ENCODE measurements at regions of chr1 and their contacts with region 1.

Region 1: DNA sequence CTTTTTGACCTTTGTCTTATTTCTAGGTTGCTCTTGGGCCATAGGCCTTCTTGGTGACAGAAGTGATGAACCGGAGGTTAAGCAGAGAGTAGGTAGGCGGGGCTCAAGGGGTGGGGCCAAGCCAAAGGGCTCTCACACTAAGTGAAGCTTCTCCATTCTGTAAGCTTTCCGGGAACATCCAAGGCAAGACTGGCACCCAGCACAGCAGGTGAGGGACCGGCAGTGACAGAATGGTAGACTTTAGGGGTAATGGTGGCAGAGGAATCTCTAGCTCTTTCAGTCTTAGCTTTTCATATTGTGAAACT is at the start of gene TNFAIP8L2:
- DNase-seq: no peak
- ATAC-seq: peak; percentile 54
- H3K4me3 ChIP-seq: no peak within 1 kb of the TSS
- H3K27ac ChIP-seq: no peak within 1 kb of the TSS
- H3K4me1 ChIP-seq: peaks cover 8% of the 10 kb centered on the region
- H3K27me3 ChIP-seq: no peaks in the 10 kb centered on the region
- CTCF ChIP-seq: no peak
- EP300 ChIP-seq: no peak
- POLR2A ChIP-seq: no peak
- RAD21 ChIP-seq: no peak
- total RNA-seq, gene TNFAIP8L2: not detected in 2 replicates

Region 2: DNA sequence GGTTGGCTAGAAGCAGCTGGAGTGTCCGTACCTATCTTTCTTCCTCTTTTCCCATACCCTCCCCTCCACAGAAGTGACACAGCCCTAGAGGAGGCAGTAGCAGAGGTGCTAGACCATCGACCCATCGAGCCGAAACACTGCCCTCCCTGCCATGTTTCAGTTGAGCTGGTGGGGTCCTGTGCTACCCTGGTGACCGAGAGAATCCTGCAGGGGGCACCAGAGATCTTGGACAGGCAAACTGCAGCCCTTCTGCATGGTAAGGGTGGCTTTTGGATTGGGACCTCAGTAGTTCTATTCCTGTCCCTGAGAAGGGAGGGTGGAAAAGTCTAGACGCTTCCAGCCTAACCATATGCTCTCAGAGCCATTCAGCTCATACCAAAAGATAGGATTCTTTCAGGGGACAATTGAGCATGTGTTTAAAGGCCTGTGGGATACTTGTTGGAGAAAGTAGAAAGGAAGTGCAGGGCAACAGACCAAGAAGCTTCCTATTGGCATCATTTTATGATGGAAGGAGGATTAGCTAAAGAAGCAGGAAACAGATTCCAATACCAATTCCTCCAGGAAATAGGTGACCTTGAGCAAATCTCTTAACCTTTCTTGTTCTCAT is 131.8 kb before region 1 on chr1:
- CTCF ChIA-PET with region 1: interaction called, 10 read pairs
- POLR2A ChIA-PET with region 1: no interaction called
- in situ Hi-C with region 1: no loop called
- intact Hi-C with region 1: loop called (anchors 2 kb)
- DNase-seq: peak; percentile 58
- ATAC-seq: peak; percentile 97
- H3K4me3 ChIP-seq: no peak overlapping the region
- H3K27ac ChIP-seq: no peak overlapping the region
- H3K4me1 ChIP-seq: no peaks in the 10 kb centered on the region
- H3K27me3 ChIP-seq: no peaks in the 10 kb centered on the region
- CTCF ChIP-seq: peak; percentile 91
- EP300 ChIP-seq: no peak
- POLR2A ChIP-seq: no peak
- RAD21 ChIP-seq: peak; percentile 78

Region 3: DNA sequence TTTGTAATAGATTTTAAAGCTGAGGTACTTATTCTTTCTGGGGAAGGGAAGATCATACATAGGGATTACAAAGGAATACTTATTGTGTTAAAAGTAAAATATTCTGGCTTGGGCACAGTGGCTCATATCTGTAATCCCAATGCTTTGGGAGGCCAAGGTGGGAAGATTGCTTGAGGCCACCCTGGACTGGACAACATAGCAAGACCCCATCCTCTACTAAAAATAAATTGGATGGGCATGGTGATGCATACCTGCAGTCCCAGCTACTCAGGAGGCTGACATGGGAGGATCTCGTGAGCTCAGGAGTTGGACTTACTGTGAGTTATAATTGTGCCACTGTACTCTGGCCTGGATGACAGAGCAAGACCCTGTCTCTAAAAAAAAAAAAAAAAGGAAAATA is 58.3 kb before region 1 on chr1:
- CTCF ChIA-PET with region 1: interaction called, 45 read pairs
- POLR2A ChIA-PET with region 1: interaction called, 5 read pairs
- in situ Hi-C with region 1: loop called (anchors 5 kb)
- intact Hi-C with region 1: loop called (anchors 1 kb)
- DNase-seq: no peak
- ATAC-seq: no peak
- H3K4me3 ChIP-seq: no peak overlapping the region
- H3K27ac ChIP-seq: no peak overlapping the region
- H3K4me1 ChIP-seq: no peaks in the 10 kb centered on the region
- H3K27me3 ChIP-seq: no peaks in the 10 kb centered on the region; a peak in 1 of 5 replicates
- CTCF ChIP-seq: no peak
- EP300 ChIP-seq: no peak
- POLR2A ChIP-seq: no peak
- RAD21 ChIP-seq: no peak

Region 4: GRCh38 chr1:151198255-151199127 is 42.0 kb after region 1 on chr1 and contains the start of gene PIP5K1A:
- CTCF ChIA-PET with region 1: no interaction called
- POLR2A ChIA-PET with region 1: no interaction called
- in situ Hi-C with region 1: no loop called
- intact Hi-C with region 1: no loop called
- DNase-seq: peak; percentile 97
- ATAC-seq: peak; percentile 76
- H3K4me3 ChIP-seq: peak within 1 kb of the TSS; percentile 87 to 95 (median 94)
- H3K27ac ChIP-seq: peak within 1 kb of the TSS; percentile 93
- H3K4me1 ChIP-seq: peaks cover 34% of the 10 kb centered on the region
- H3K27me3 ChIP-seq: no peaks in the 10 kb centered on the region; a peak in 1 of 5 replicates
- CTCF ChIP-seq: no peak
- EP300 ChIP-seq: no peak
- POLR2A ChIP-seq: peak; percentile 74 to 84
- RAD21 ChIP-seq: no peak
- total RNA-seq, gene PIP5K1A: 43.8 and 45.3 TPM in 2 replicates

Measured in HepG2 (cell line).